CD14-positive monocyte (primary cell): ENCODE measurements at regions of chr4 and their contacts with region 1.

Region 1: DNA sequence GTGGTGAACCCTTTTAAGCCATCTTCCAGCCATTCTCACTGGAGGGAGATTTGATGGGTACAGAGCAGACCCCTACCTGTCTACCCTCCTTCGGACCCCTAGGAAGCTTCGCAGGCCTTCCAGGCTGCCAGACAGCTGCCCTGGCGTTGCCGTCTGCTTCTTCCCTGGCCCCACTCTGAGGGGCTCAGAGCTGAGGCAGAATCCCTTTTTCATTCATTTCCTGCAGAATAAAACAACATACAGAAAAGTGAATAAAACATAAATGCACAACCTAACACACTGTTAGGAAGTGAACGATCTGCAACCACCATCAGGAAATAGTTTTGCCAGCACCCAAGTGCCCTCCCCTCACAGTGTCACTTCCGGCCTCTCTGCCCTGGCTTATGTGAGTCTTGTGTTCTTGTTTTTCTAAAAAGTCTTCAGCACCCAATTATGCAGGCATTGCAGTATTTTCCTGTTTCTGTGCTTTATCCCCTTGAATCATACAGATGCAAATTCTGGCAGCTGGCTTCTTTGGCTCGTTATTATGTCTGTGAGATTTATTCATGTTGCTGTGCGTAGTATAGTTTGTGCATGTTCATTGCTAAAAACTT is 5.6 kb upstream of the ADD1 start:
- DNase-seq: peak; percentile 67 to 72 (median 70)
- H3K4me3 ChIP-seq: peak overlapping the region in 1 of 3 experiments; percentile 48
- H3K4me3 Mint-ChIP-seq: peak overlapping the region in 1 of 2 donors; percentile 62
- H3K27ac ChIP-seq: peak overlapping the region; percentile 69 to 73
- H3K27ac Mint-ChIP-seq: peak overlapping the region; percentile 76 to 94 (median 89)
- H3K4me1 ChIP-seq: peaks cover 64 to 72% of the 10 kb centered on the region in 2 donors
- H3K4me1 Mint-ChIP-seq: peaks cover 71% of the 10 kb centered on the region
- H3K27me3 ChIP-seq: no peaks in the 10 kb centered on the region
- H3K27me3 Mint-ChIP-seq: peaks cover 0 to 2% (median 0%) of the 10 kb centered on the region in 3 donors
- CTCF ChIP-seq: no peak

Region 2: GRCh38 chr4:2755837-2756694 is 81.9 kb before region 1 on chr4 and contains the start of gene TNIP2:
- intact Hi-C with region 1: loop called (anchors 5 kb)
- DNase-seq: peak; percentile 69 to 82 (median 73)
- H3K4me3 ChIP-seq: peak within 1 kb of the TSS; percentile 67 to 92 (median 83)
- H3K4me3 Mint-ChIP-seq: peak within 1 kb of the TSS; percentile 72 to 82
- H3K27ac ChIP-seq: peak within 1 kb of the TSS; percentile 23 to 80
- H3K27ac Mint-ChIP-seq: peak within 1 kb of the TSS; percentile 30 to 88 (median 66)
- H3K4me1 ChIP-seq: peaks cover 15 to 19% of the 10 kb centered on the region in 2 donors
- H3K4me1 Mint-ChIP-seq: peaks cover 35% of the 10 kb centered on the region
- H3K27me3 ChIP-seq: no peaks in the 10 kb centered on the region
- H3K27me3 Mint-ChIP-seq: peaks cover 0 to 10% (median 3%) of the 10 kb centered on the region in 3 donors
- CTCF ChIP-seq: peak; percentile 34
- polyA plus RNA-seq, gene TNIP2: 27.6 to 75.7 (median 28.2) TPM